ENCODE measurements at regions of chr4 and their contacts with region 1.

Region 1: DNA sequence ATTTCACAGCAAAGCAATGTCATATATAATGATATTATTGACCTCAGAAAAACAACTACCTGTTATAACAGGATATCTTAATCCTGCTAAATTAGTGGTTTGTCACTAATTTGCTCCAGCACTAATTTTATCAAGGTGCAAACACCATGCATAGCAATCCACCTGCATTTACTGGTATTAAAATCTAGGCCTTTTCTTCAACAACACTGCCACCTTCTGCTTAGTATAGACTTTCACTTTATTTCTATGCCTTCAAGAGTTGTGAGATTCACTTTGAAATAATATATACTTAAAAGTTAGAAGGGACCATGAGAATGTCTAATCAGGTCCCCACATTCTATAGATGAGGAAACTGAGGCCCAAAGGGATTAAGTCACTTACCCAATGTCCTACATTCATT is 82.1 kb upstream of the IQCM start:
- DNase-seq: no peak
- H3K4me3 Mint-ChIP-seq: no peak overlapping the region
- H3K27ac Mint-ChIP-seq: no peak overlapping the region
- H3K4me1 Mint-ChIP-seq: no peaks in the 10 kb centered on the region
- H3K27me3 Mint-ChIP-seq: no peaks in the 10 kb centered on the region

Region 2: GRCh38 chr4:149370785-149371420 is 526.9 kb before region 1 on chr4:
- CTCF ChIA-PET with region 1: no interaction called
- POLR2A ChIA-PET with region 1: no interaction called
- intact Hi-C with region 1: loop called (anchors 2 kb)
- DNase-seq: no peak
- H3K4me3 Mint-ChIP-seq: no peak overlapping the region
- H3K27ac Mint-ChIP-seq: no peak overlapping the region
- H3K4me1 Mint-ChIP-seq: no peaks in the 10 kb centered on the region
- H3K27me3 Mint-ChIP-seq: no peaks in the 10 kb centered on the region